GM10248 (cell line): ENCODE measurements at regions of chr10 and their contacts with region 1.

Region 1: DNA sequence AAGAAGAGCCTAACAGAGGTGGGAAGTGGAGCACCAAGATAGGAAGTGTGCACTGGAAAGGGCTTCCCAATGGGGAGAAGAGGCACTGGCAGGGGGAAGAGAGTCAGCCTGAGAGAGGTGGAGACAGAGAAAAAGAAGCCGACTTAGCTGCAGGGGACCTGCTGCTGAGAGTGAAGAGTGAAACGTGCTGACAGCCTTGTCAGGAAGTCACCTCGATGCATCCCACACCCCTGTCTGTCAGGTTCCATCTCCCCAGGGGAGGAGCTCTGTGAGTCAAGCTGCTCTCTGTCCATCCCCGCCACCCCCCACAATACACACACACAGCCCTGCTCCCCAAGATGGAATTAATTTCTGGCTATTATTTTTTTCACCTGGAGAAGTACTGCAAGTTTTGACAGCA is 14.0 kb downstream of the KAZALD1 start:
- DNase-seq: no peak
- CTCF ChIP-seq: no peak

Region 2: GRCh38 chr10:101050208-101051069 is 25.3 kb before region 1 on chr10:
- CTCF ChIA-PET with region 1: interaction called, 855 read pairs
- POLR2A ChIA-PET with region 1: no interaction called
- DNase-seq: peak; percentile 85
- CTCF ChIP-seq: peak; percentile 82